MCF 10A (cell line): ENCODE measurements at regions of chr10 and their contacts with region 1.

Region 1: GRCh38 chr10:70404036-70404786 is at the start of gene EIF4EBP2:
- DNase-seq: peak; percentile 96
- H3K4me3 Mint-ChIP-seq: peak within 1 kb of the TSS; percentile 84
- H3K27ac Mint-ChIP-seq: peak within 1 kb of the TSS; percentile 89
- H3K4me1 Mint-ChIP-seq: peaks cover 20% of the 10 kb centered on the region
- H3K27me3 Mint-ChIP-seq: no peaks in the 10 kb centered on the region
- CTCF ChIP-seq: no peak
- total RNA-seq, gene EIF4EBP2: 21.2 and 26.1 TPM in 2 replicates

Region 2: DNA sequence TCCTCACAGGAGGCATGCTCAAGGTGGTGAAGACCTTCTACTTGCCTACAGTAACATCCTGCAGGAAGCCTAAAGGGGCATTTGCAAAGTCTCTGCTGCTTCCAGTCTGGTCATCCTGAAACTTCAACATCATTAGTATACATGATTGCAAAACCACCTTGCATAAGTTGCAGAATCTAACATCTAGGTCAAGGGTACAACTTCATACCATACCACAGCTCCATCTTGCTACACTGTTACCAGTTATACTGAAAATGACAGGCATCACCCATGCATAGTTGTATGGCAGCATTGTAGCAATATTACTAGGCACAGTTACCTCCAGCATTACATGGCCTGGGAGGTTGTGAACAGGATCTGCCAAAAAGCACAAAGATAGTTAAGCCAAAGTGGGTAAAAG is 365.3 kb before region 1 on chr10:
- CTCF ChIA-PET with region 1: no interaction called
- POLR2A ChIA-PET with region 1: no interaction called
- intact Hi-C with region 1: no loop called
- DNase-seq: no peak
- H3K4me3 Mint-ChIP-seq: no peak overlapping the region
- H3K27ac Mint-ChIP-seq: no peak overlapping the region
- H3K4me1 Mint-ChIP-seq: no peaks in the 10 kb centered on the region
- H3K27me3 Mint-ChIP-seq: peaks cover 12% of the 10 kb centered on the region
- CTCF ChIP-seq: no peak

Region 3: DNA sequence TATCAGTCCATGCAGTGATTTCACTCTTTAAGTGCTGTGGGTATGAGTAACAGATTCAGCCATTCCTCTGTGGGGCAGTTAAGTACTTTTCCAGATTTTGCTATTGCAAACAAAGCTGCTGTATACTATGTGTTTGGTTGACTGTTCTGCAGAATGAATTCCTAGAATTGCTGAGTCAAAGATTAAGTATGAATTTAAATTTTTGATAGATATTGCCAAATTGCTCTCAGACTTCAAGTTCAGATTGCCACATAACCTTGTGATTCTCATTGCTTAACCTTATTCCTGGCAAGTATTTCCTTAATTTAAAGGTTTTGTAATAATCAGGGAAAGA is 212.3 kb before region 1 on chr10:
- CTCF ChIA-PET with region 1: interaction called, 4 read pairs
- POLR2A ChIA-PET with region 1: interaction called, 35 read pairs
- intact Hi-C with region 1: no loop called
- DNase-seq: peak; percentile 86
- H3K4me3 Mint-ChIP-seq: peak overlapping the region; percentile 16
- H3K27ac Mint-ChIP-seq: peak overlapping the region; percentile 73
- H3K4me1 Mint-ChIP-seq: peaks cover 41% of the 10 kb centered on the region
- H3K27me3 Mint-ChIP-seq: no peaks in the 10 kb centered on the region
- CTCF ChIP-seq: no peak

Region 4: GRCh38 chr10:70227548-70228320 is 176.5 kb before region 1 on chr10:
- CTCF ChIA-PET with region 1: interaction called, 9 read pairs
- POLR2A ChIA-PET with region 1: interaction called, 62 read pairs
- intact Hi-C with region 1: no loop called
- DNase-seq: peak; percentile 16
- H3K4me3 Mint-ChIP-seq: peak overlapping the region; percentile 29
- H3K27ac Mint-ChIP-seq: peak overlapping the region; percentile 81
- H3K4me1 Mint-ChIP-seq: peaks cover 42% of the 10 kb centered on the region
- H3K27me3 Mint-ChIP-seq: no peaks in the 10 kb centered on the region
- CTCF ChIP-seq: no peak

Region 5: DNA sequence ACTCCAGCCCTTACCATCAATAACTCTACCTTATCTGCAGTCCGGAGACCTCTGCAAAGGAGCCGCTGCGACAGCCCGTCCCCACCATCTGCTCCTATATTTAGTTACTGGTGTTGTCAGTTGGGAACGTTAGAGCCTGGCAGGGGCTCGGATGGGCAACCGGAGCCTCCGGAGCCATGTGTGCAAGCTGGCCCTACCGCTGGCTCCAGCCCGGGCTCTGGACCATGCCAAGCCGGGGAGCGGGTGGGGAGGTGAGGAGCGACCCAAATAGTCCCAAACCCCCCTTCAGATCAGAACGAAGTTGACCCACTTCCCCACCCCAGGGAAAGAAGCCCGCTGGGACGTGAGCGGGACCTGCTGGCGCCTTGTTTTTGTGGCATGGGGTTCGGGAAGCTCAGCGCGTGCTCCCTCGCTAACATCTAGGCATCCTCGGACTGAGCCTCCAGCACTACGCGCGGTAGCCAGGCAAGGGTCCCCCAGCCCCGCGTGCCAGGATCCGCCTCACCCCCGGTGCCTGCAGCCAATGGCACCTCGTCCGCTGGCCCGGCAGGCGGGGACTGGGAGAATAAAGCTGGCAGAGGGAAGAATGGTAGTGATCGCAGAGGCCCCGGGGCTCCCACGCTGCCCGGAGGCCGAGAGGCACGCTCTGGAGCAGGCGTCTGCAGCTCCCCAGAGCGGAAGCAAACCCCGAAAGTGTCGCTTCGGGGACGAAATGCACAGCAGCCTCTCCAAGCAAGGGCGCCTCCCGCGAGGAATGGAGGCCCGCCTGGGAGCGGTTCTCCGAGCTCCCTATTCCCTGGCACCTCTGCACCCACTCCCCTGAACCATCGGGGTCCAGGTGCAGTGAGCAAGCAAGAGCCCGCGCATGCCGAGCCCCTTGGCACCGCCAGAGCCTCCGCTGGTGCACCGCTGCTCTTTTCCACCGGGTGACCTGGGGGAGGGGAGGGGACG is 22.5 kb before region 1 on chr10:
- CTCF ChIA-PET with region 1: interaction called, 36 read pairs
- POLR2A ChIA-PET with region 1: interaction called, 170 read pairs
- intact Hi-C with region 1: no loop called
- DNase-seq: no peak
- H3K4me3 Mint-ChIP-seq: peak overlapping the region; percentile 75
- H3K27ac Mint-ChIP-seq: no peak overlapping the region
- H3K4me1 Mint-ChIP-seq: peaks cover 20% of the 10 kb centered on the region
- H3K27me3 Mint-ChIP-seq: no peaks in the 10 kb centered on the region
- CTCF ChIP-seq: no peak

Region 6: GRCh38 chr10:70425096-70425495 is 20.9 kb after region 1 on chr10:
- CTCF ChIA-PET with region 1: interaction called, 4 read pairs
- POLR2A ChIA-PET with region 1: interaction called, 49 read pairs
- intact Hi-C with region 1: no loop called
- DNase-seq: no peak
- H3K4me3 Mint-ChIP-seq: no peak overlapping the region
- H3K27ac Mint-ChIP-seq: no peak overlapping the region
- H3K4me1 Mint-ChIP-seq: no peaks in the 10 kb centered on the region
- H3K27me3 Mint-ChIP-seq: no peaks in the 10 kb centered on the region
- CTCF ChIP-seq: no peak

Region 7: GRCh38 chr10:70558871-70559810 is 154.9 kb after region 1 on chr10:
- CTCF ChIA-PET with region 1: no interaction called
- POLR2A ChIA-PET with region 1: no interaction called
- intact Hi-C with region 1: no loop called
- DNase-seq: peak; percentile 66
- H3K4me3 Mint-ChIP-seq: no peak overlapping the region
- H3K27ac Mint-ChIP-seq: no peak overlapping the region
- H3K4me1 Mint-ChIP-seq: peaks cover 9% of the 10 kb centered on the region
- H3K27me3 Mint-ChIP-seq: peaks cover 15% of the 10 kb centered on the region
- CTCF ChIP-seq: peak; percentile 69